Activated B cell treated with CpG ODN at 0.5 μM for 24 hours (primary cell): ENCODE measurements at regions of chr1 and their contacts with region 1.

Region 1: GRCh38 chr1:21294266-21294989 is 4.2 kb upstream of the ECE1 start:
- DNase-seq: peak; percentile 79
- ATAC-seq: peak; percentile 67
- H3K4me3 Mint-ChIP-seq: peak overlapping the region; percentile 90
- H3K27ac Mint-ChIP-seq: peak overlapping the region; percentile 98
- H3K4me1 Mint-ChIP-seq: peaks cover 89% of the 10 kb centered on the region
- H3K27me3 Mint-ChIP-seq: no peaks in the 10 kb centered on the region
- CTCF ChIP-seq: no peak

Region 2: DNA sequence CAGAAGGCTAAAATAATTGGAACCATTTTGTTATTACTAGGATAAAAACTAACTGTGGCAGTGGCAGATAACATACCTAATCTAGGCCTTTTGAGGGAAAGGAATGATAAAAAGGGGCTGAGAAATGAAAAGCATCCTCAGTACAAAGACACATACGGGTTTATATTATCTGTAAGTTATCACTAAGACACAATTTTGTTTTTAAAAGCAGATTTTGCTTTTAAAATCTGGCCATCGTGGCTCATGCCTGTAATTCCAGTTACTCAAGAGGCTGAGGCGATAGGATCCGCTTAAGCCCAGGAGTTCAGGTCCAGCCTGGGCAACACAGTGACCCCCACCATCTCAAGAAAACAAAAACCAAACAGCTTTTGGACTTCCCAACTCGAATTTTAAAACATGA is 482.5 kb before region 1 on chr1:
- CTCF ChIA-PET with region 1: no interaction called
- POLR2A ChIA-PET with region 1: no interaction called
- intact Hi-C with region 1: no loop called
- DNase-seq: no peak
- ATAC-seq: no peak
- H3K4me3 Mint-ChIP-seq: no peak overlapping the region
- H3K27ac Mint-ChIP-seq: no peak overlapping the region
- H3K4me1 Mint-ChIP-seq: no peaks in the 10 kb centered on the region
- H3K27me3 Mint-ChIP-seq: no peaks in the 10 kb centered on the region
- CTCF ChIP-seq: no peak

Region 3: DNA sequence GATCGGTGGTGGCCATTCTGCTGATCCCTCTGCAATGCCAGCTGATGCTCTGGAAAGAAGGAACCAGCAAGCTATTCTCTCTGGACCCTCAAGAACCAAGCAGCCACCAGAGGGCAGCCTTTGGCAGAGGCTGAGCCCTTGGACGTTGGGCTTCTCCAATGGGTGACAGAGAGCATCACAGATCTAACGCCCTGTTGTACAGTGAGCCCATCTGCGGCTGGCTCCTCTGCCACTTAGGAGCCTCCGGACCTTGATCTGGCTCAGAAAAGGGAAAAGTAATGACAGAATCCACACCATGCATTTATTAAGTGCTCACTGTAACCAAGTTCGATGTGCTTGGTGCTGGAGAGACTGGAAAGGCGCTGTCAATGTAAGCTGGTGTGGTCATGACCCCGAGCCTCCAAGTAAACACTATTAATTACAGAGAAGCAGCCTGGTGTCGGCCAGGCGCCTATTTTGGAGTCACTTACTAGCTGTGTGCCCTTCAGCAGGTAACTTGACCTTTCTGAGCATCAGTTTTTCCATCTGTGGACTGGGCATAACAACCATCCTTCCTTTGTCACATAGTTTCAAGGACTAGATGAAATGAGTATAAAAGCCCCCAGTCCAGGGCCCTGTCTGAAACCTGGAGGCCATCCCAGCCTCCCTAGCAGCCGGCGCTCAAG is 39.0 kb before region 1 on chr1:
- CTCF ChIA-PET with region 1: interaction called, 37 read pairs
- POLR2A ChIA-PET with region 1: interaction called, 38 read pairs
- intact Hi-C with region 1: loop called (anchors 1 kb)
- DNase-seq: peak; percentile 66
- ATAC-seq: peak; percentile 79
- H3K4me3 Mint-ChIP-seq: no peak overlapping the region
- H3K27ac Mint-ChIP-seq: peak overlapping the region; percentile 69
- H3K4me1 Mint-ChIP-seq: peaks cover 24% of the 10 kb centered on the region
- H3K27me3 Mint-ChIP-seq: no peaks in the 10 kb centered on the region
- CTCF ChIP-seq: no peak

Region 4: DNA sequence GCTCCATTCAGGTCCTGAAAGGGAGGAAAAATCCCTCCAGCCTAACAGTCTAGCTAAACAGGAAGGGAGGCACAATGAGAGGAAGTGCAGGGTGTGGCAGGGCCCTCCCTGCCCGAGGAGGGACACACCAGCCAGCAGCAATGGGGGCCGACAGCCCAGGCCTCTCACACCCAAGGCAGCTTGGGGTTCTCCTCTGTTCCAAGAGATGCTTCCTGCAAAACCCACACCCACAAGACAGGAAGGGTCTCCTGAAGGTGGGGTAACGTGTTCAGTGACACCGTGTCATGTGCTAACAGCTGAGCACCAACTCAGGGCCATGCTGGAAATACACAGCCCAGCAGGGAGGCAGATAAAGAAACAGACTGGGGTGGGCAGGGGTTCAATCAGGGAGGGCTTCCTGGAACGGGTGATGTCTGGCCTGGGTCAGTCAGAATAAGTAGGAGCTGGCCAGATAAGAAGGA is 14.4 kb before region 1 on chr1:
- CTCF ChIA-PET with region 1: no interaction called
- POLR2A ChIA-PET with region 1: interaction called, 11 read pairs
- intact Hi-C with region 1: loop called (anchors 1 kb)
- DNase-seq: no peak
- ATAC-seq: peak; percentile 43
- H3K4me3 Mint-ChIP-seq: peak overlapping the region; percentile 29
- H3K27ac Mint-ChIP-seq: peak overlapping the region; percentile 81
- H3K4me1 Mint-ChIP-seq: peaks cover 44% of the 10 kb centered on the region
- H3K27me3 Mint-ChIP-seq: no peaks in the 10 kb centered on the region
- CTCF ChIP-seq: no peak

Region 5: DNA sequence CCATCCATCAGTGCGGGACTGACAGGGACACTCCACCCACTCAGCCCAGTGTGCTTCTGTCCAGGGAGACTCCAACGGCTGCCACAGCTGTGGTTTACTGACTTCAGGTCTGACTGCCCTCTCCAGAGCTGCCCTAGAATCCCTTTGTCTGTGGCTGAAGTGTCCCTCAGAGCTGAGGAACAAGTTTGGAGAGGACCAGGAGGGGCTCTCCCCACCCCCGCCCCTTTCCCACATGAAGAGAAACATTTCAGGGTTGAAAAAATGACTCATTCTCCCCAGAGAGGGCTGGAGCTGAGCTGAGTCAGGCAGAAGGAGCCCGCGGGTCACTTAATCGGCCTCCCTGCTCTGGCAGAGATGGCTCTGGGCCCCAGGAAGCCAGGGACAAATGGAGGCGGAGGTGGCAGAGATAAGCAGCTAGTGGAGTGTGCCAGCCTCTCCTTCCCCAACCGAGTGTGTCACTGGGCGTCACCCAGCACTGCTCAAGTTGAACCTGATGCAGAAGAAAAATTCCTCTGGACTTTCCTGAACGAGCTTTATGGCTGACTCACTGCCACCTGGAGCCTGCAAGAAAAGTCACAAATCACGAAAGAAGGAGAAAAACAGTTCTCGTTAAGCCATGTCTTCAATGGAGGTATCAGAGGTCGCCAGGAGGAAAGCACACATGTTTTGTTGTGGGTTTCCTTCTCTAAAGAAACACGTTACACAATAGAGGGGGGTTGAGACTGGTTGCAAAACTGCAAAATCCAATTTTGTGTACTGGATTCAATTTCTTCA is 30.1 kb after region 1 on chr1:
- CTCF ChIA-PET with region 1: interaction called, 10 read pairs
- POLR2A ChIA-PET with region 1: interaction called, 313 read pairs
- intact Hi-C with region 1: loop called (anchors 1 kb)
- DNase-seq: peak; percentile 51
- ATAC-seq: peak; percentile 71
- H3K4me3 Mint-ChIP-seq: peak overlapping the region; percentile 72
- H3K27ac Mint-ChIP-seq: peak overlapping the region; percentile 90
- H3K4me1 Mint-ChIP-seq: peaks cover 87% of the 10 kb centered on the region
- H3K27me3 Mint-ChIP-seq: no peaks in the 10 kb centered on the region
- CTCF ChIP-seq: no peak

Region 6: GRCh38 chr1:21344750-21345443 is 50.5 kb after region 1 on chr1:
- CTCF ChIA-PET with region 1: interaction called, 10 read pairs
- POLR2A ChIA-PET with region 1: interaction called, 157 read pairs
- intact Hi-C with region 1: loop called (anchors 1 kb)
- DNase-seq: peak; percentile 36
- ATAC-seq: peak; percentile 22
- H3K4me3 Mint-ChIP-seq: peak overlapping the region; percentile 92
- H3K27ac Mint-ChIP-seq: peak overlapping the region; percentile 77
- H3K4me1 Mint-ChIP-seq: peaks cover 43% of the 10 kb centered on the region
- H3K27me3 Mint-ChIP-seq: no peaks in the 10 kb centered on the region
- CTCF ChIP-seq: no peak

Region 7: DNA sequence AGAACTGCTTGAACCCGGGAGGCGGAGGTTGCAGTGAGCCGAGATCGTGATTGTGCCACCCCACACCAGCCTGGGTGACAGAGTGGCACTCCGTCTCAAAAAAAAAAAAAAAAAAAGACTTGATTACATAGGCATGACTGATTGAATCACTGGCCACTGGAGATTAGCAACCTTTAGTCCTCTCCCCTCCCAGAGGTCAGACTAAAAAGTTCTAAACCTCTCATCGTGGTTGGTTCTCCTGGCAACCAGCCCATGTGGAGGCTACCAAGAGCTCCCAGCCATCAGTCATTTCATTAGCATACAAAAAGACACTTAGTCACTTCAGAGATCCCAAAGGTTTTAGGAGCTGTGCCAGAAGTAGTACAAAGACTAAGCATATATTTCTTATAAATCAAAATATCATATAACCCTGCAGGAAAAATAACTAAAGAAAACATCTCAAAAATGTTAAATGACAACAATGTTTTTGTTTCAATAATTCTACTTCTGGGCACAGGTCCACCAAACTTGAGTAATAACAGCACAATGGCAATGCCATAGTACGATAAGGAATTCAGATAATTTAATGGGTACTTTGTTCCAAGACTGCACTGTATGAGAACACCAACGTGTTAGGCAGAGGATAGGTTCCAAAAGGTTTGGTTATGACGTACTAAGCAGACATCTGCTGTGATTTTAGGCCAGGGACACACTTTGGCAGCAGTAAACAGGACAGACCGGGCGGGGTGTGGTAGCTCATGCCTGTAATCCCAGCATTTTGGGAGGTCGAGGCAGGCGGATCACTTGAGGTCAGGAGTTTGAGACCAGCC is 470.4 kb after region 1 on chr1:
- CTCF ChIA-PET with region 1: no interaction called
- POLR2A ChIA-PET with region 1: no interaction called
- intact Hi-C with region 1: loop called (anchors 5 kb)
- DNase-seq: no peak
- ATAC-seq: no peak
- H3K4me3 Mint-ChIP-seq: no peak overlapping the region
- H3K27ac Mint-ChIP-seq: peak overlapping the region; percentile 57
- H3K4me1 Mint-ChIP-seq: peaks cover 75% of the 10 kb centered on the region
- H3K27me3 Mint-ChIP-seq: no peaks in the 10 kb centered on the region
- CTCF ChIP-seq: no peak

Region 8: DNA sequence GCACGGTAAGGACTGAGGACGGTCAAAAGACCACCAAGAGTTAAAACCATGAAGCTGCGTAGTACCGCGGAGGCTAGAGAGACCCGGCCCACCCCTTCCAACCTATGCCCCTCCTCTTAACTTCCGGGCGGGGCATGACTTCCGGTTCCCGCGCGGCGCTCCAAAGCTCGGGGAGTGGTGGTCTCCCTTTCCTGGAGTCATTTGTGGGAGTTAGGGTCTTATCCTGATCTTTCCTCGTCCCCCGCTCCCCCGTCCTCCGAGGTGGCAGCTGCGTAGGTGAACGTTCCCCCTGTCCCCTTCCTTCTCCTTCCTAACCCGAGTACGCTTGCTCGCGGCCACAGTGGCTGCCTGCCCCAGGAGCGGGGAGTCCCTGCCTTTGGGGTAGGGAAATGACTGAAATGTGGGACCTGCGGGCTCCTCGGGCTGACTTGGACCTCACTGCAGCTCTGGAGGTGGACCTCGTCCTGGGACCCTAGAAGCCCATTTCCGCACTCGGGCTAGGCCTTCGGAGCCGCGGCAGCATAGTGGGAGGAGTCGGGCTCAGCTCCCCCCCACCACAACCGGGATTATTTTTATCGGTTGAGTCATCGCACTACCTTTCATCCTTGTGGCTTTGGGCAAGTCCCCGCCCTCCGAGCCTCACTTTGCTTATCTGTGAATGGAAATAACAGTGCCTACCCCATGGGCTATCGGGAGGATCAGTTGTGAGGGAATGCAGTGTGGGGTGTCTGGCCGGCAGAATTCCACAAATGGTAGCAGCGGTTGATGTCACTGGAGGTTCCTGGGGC is 731.1 kb after region 1 on chr1:
- CTCF ChIA-PET with region 1: no interaction called
- POLR2A ChIA-PET with region 1: interaction called, 5 read pairs
- intact Hi-C with region 1: loop called (anchors 5 kb)
- DNase-seq: peak; percentile 79
- ATAC-seq: peak; percentile 76
- H3K4me3 Mint-ChIP-seq: peak overlapping the region; percentile 96
- H3K27ac Mint-ChIP-seq: peak overlapping the region; percentile 99
- H3K4me1 Mint-ChIP-seq: peaks cover 54% of the 10 kb centered on the region
- H3K27me3 Mint-ChIP-seq: no peaks in the 10 kb centered on the region
- CTCF ChIP-seq: no peak